ENCODE measurements at regions of chr16 and their contacts with region 1.

Region 1: GRCh38 chr16:51002881-51003490 is 148.1 kb downstream of the SALL1 start:
- DNase-seq: no peak
- ATAC-seq: no peak
- H3K4me3 ChIP-seq: no peak overlapping the region
- H3K27ac ChIP-seq: no peak overlapping the region
- H3K4me1 ChIP-seq: no peaks in the 10 kb centered on the region
- H3K27me3 ChIP-seq: peaks cover 0 to 2% (median 0%) of the 10 kb centered on the region in 3 donors
- CTCF ChIP-seq: no peak

Region 2: DNA sequence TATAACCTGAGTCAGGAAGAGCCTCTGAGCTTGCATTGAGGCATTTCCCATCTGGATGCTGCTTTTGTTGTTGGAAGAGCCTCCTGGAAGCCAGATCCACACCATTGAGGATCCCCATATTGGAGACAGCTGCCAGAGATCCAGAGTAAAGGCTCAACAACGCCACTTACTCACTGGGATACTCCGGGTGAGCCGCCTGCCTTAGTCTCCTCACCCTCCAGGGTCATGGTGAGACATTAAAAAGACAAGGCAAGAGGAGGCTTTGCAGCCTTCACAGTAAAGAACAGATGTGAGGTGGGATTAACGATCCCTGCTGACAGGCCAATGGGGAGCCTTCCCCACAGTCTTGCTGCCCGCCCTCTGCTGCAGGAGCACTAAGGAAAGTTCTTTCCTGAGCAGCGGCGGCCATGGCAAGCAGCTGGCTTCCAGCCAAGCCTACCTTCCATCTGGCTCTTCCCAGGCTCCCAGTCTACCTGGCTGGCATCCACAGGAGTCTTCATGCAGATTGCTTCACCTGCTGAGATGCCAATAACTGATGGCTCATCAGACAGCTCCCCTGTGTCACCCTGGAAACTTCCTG is 62.6 kb before region 1 on chr16:
- intact Hi-C with region 1: loop called in 1 of 2 experiments (anchors 10 kb)
- DNase-seq: no peak
- ATAC-seq: no peak
- H3K4me3 ChIP-seq: no peak overlapping the region
- H3K27ac ChIP-seq: no peak overlapping the region
- H3K4me1 ChIP-seq: no peaks in the 10 kb centered on the region
- H3K27me3 ChIP-seq: no peaks in the 10 kb centered on the region
- CTCF ChIP-seq: no peak

Measured in psoas muscle (tissue), 8 donors.